ENCODE measurements at regions of chr10 and their contacts with region 1.

Region 1: DNA sequence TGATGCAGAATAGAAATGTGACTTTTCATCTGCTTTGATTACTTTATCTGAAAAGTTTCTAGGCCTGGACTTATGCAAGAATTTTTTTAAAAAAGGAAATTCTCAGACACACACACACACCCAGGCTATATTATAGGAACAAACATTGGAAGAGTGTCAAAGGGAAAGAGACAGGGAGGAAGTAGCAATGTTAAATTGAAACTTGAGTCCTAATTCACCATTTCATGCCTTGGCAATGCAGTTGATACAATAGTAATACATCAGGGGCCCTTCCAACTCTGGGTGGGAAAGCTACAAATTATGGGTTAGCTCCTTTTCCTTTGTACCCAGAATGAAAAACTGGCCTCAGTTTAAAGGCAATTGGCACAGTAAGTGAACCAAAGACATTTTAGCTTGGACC is 258.0 kb upstream of the LYZL1 start:
- DNase-seq: peak; percentile 28
- ATAC-seq: peak; percentile 84
- H3K4me3 ChIP-seq: no peak overlapping the region
- H3K27ac ChIP-seq: no peak overlapping the region
- H3K4me1 ChIP-seq: peaks cover 21% of the 10 kb centered on the region
- H3K27me3 ChIP-seq: no peaks in the 10 kb centered on the region
- CTCF ChIP-seq: no peak

Region 2: DNA sequence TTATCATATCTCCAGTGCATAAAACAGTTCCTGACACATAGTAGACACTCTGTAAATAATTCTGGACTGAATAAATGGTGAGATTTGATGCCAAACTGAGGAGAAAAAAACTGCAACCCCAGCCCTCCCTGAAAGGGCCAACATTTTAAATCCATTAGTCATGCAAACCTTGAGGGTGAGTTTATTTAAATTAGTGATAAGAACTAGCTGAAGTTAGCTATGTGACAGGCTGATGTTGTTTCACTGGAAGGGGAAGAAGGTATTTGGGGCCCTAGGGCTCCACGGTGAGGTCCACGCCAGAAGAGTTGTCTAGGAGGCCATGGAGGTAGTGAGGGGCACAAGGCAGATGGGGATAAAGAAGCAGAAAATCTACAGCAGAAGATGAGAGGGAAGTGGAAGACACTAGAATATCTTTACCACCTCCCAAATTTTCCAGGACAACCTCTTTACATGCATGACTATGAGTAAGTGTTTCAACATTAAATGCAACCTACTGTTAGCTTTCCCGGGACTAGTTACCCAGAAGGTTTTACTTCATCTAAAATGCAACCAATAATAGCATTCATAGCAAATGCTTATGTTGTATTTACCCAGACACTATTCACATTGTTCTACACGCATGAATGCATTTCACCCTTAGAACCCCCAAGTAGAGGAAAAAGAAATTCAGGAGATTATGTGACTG is 74.8 kb after region 1 on chr10:
- CTCF ChIA-PET with region 1: no interaction called
- POLR2A ChIA-PET with region 1: no interaction called
- intact Hi-C with region 1: loop called (anchors 2 kb)
- DNase-seq: peak; percentile 84
- ATAC-seq: peak; percentile 71
- H3K4me3 ChIP-seq: peak overlapping the region; percentile 30; the same call in 1 of the 2 replicates
- H3K27ac ChIP-seq: peak overlapping the region; percentile 92
- H3K4me1 ChIP-seq: peaks cover 55% of the 10 kb centered on the region
- H3K27me3 ChIP-seq: no peaks in the 10 kb centered on the region
- CTCF ChIP-seq: no peak

Measured in PC-3 (cell line).